ENCODE measurements at regions of chr10 and their contacts with region 1.

Region 1: DNA sequence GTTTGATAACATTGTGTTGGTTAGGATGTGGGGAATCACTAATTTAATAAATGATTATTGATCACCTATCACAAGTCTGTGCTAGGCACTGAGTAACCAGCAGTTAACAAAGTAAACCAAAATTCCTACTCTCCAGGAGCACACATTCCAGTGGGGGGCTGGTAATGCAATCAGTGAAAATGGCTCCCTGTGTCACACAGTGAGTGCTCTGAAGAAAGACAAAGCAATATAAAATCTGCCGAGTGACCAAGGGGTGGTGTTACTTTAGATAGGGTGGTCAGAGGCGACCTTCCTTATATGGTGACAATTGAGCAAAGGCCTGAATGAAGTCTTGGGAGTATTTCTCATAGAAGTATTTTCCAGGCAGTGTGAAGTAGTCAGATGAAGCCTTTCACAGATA is 13.6 kb upstream of the SMC3 start:
- DNase-seq: no peak
- CTCF ChIP-seq: no peak

Region 2: DNA sequence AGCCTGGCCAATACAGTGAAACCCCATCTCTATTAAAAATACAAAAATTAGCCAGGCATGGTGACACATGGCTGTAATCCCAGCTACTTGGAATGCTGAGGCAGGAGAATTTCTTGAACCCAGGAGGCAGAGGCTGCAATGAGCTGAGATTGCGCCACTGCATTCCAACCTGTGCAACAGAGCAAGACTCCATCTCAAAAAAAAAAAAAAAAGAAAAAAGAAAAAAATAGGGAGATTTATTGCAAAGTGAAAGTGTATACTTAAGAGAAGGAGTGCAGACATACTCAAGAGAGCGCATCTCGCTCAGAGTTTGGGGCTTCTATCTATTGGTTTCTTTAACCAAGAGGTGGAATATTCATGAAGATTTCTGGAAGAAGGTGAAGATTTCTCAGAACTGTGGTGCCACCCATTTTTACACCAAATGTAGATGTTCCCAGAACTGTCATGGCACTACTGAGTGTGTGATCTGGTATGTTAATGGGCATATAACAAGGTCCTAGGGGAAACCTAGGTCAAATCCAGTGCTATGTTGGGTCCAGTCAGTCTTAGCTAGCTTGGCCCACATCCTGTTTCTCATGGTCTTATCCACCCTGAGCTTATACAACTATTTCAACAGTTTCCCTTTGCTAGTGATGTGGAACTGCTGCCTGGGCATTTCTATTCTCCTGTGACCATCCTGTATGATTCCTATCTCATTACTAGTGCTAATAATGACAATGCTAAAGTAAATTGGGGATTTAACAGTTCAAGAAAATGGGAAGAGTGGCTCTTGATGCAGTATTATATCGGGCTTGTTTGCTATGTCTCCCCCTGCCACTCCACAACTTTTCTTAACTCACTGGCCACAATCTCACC is 1338.8 kb before region 1 on chr10:
- in situ Hi-C with region 1: no loop called
- DNase-seq: no peak
- CTCF ChIP-seq: no peak

Region 3: GRCh38 chr10:110304780-110305421 is 249.0 kb before region 1 on chr10 and contains the start of gene SMNDC1:
- in situ Hi-C with region 1: loop called (anchors 5 kb)
- DNase-seq: peak; percentile 97
- CTCF ChIP-seq: no peak

Region 4: DNA sequence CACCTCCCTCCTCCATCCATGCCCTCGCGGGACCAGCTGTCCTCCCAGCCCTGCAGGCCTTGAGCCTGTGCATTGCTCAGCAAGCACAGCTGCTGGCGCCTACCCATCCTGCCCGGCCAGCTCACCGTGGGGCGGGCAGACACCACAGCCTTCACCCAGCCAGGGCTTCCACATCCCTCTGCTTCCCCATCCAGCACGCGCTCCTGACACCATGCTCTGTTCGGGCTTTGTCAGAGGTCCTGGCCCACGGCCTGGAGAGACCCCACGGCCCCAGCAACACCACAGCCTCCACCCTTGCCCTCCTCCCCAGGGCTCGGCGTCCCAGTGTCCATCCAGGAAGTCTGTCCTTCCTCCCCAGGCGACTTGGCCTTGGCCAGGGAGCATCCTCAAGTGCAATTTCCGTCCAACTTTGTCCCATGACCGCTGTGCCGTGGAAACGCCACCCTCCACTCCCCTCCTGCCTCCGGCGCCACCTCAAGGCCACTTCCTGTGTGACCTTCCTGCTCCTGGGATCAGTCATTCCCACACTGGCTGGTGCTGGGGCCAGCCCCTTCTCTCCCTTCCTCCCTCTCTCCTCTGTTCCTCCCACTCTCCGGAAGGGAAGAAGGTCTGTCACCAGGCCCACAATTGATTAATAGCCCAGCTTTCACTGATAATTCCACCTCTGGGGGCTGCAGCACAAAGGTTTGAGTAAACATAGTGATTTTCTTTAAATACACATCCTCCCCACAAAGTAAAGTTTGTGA is 177.7 kb before region 1 on chr10:
- in situ Hi-C with region 1: no loop called
- DNase-seq: no peak
- CTCF ChIP-seq: no peak

Region 5: DNA sequence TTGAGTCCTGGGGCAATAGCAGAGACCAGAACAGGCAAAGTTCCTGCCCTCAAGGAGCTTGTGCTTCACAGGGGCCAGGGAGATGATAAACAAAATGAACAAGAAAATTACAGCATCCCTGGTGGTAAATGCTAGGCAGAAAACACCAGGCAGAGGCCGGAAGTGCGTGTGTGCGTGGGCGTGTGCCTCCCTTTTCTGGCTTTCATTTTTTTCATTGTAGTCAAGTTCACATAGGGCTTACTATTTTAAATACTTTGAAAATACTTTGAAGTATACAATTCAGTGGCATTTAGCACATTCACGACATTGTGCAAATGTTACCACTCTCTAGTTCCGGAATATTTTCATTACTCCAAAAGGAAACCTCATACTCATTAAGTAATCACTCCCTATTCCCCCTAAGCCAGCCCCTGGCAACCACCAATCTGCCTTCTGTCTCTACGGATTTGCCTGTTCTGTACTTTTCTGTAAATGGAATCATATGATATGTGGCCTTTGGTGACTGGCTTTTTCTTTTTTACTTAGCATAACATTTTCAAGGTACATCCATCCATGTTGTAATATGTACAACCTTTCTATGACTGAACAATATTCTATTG is 229.7 kb after region 1 on chr10:
- in situ Hi-C with region 1: no loop called
- DNase-seq: no peak
- CTCF ChIP-seq: no peak

Measured in GM13976 (cell line).